PC-3 (cell line): ENCODE measurements at regions of chr3 and their contacts with region 1.

Region 1: DNA sequence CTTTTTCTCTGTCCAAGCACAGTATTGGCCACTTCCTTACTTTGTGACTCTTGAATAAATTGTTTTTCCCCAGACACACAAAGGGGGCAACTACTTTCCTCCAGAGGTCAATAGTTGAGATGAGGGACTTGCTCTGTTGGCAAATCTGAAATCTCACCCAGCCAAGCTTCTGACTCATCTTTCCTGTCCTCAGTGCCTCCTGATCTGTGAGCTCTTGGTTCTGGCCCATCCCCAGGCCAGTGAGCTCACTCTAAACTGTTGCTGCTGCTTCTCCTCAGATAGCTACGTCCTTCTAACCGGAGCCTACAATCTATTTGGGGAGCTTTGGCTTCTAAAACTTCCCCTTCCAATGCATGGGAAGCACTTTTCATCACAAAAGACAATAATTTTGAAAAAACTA is 50.0 kb upstream of the NMD3 start:
- DNase-seq: peak; percentile 71
- ATAC-seq: peak; percentile 92
- H3K4me3 ChIP-seq: no peak overlapping the region
- H3K27ac ChIP-seq: no peak overlapping the region
- H3K4me1 ChIP-seq: peaks cover 24% of the 10 kb centered on the region
- H3K27me3 ChIP-seq: no peaks in the 10 kb centered on the region
- CTCF ChIP-seq: no peak

Region 2: DNA sequence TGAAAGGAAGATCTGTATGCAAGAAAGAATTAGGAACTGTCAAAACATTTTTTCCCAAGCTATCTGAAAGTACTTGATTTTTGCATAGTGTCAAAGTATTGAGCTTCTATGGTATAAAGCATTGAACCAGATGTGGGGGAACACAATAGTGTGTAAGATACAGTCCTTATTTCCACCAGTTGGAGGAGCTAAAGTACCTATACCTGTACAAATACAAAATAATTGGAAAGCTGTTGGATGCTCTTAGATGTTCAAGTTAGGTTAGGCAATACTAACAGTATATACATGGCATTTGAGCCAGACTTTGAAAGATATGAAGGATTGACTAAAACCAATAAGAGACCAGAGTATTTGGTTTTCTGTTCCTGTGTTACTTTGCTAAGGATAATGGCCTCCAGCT is 214.3 kb before region 1 on chr3:
- CTCF ChIA-PET with region 1: no interaction called
- POLR2A ChIA-PET with region 1: no interaction called
- intact Hi-C with region 1: loop called (anchors 10 kb)
- DNase-seq: peak; percentile 74
- ATAC-seq: peak; percentile 92
- H3K4me3 ChIP-seq: no peak overlapping the region
- H3K27ac ChIP-seq: no peak overlapping the region
- H3K4me1 ChIP-seq: no peaks in the 10 kb centered on the region
- H3K27me3 ChIP-seq: no peaks in the 10 kb centered on the region
- CTCF ChIP-seq: peak; percentile 86

Region 3: DNA sequence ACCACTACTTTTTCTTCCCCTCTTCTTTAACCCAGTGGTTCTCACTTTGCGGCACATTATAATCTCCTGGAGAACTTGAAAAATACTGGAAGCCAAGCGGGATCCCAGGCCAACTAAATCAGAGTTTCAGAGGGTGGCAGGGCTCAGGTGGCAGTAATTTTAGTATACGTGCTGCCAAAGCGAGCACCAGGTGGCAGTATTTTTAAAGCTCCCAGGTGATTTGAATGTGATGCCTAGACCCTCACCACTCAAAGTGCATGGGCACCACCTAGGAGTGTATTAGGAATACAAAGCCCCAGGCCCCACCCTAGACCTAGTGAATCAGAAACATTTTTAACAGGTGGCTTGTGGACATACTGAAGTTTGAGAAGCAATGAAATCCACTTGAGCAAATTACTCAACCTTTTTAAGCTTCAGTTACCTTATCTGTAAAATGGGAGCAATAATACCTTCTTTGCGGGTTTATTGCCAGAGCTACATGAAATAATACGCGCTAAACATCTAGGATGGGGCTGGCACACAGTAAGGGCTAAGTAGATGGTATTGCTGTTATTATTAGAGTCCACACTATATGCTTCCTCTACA is 74.2 kb before region 1 on chr3:
- CTCF ChIA-PET with region 1: interaction called, 4 read pairs
- POLR2A ChIA-PET with region 1: no interaction called
- intact Hi-C with region 1: loop called (anchors 2 kb)
- DNase-seq: peak; percentile 72
- ATAC-seq: peak; percentile 77
- H3K4me3 ChIP-seq: no peak overlapping the region
- H3K27ac ChIP-seq: no peak overlapping the region
- H3K4me1 ChIP-seq: 0 out of 2 replicates have a peak, but pooled peaks cover 11% of the 10 kb centered on the region
- H3K27me3 ChIP-seq: no peaks in the 10 kb centered on the region
- CTCF ChIP-seq: peak; percentile 93

Region 4: DNA sequence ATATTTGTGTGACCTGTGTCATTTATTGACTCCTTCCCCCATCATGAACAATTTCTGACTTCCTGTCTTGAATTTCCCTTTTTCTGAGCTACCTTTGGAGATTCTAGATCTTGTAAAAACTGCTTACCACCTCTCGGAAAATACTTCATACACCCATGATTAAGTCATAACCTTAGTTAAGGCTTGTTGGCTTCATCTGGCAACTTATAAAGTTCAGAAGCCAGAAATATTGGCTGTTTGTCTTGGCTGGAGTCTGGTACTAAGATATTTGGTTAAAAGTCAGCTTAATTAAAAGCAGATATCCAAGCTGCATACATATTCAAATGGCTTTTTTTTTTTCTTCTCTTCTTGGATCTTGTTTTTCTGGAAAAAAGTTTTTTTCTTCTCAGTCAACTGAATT is 28.6 kb before region 1 on chr3:
- CTCF ChIA-PET with region 1: no interaction called
- POLR2A ChIA-PET with region 1: no interaction called
- intact Hi-C with region 1: loop called (anchors 5 kb)
- DNase-seq: peak; percentile 35
- ATAC-seq: peak; percentile 27
- H3K4me3 ChIP-seq: no peak overlapping the region
- H3K27ac ChIP-seq: peak overlapping the region; percentile 94
- H3K4me1 ChIP-seq: peaks cover 40% of the 10 kb centered on the region
- H3K27me3 ChIP-seq: no peaks in the 10 kb centered on the region
- CTCF ChIP-seq: no peak